OCI-LY7 (cell line): ENCODE measurements at regions of chr10 and their contacts with region 1.

Region 1: DNA sequence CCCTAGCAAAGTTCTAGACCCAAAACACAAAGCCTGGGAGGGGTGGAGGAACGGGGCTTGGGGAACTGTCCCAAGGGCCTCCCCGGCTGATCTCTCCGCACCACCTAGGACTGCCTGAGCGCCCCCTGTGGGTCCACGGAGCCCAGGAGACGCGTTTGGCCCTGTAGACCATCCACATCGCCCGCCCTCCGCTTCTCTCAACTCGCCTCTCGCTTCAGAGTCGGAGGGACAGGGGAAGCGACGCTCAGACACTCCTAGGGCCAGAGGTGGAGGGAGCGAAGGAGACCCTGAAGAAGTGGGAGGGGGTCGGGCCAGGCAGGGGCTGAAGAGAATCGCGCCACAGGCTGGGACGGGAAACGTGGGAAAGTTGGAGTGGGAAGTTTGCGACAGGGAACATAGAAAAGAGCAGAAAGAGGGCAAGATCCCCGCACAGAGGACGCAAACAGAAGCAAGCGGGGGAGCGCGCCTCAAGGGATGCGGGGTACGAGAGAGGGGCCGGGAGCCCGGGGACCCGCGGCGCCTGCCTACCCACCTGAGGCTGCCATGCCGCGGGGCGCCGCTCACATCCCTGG is 378 bp downstream of the PIK3AP1 start:
- DNase-seq: peak; percentile 94
- H3K4me3 ChIP-seq: peak overlapping the region; percentile 87
- H3K27ac ChIP-seq: peak overlapping the region; percentile 91
- H3K4me1 ChIP-seq: peaks cover 66% of the 10 kb centered on the region
- CTCF ChIP-seq: peak; percentile 86

Region 2: GRCh38 chr10:96642973-96643372 is 77.0 kb before region 1 on chr10:
- CTCF ChIA-PET with region 1: interaction called, 7 read pairs
- POLR2A ChIA-PET with region 1: interaction called, 17 read pairs
- intact Hi-C with region 1: loop called (anchors 1 kb)
- DNase-seq: peak; percentile 87
- H3K4me3 ChIP-seq: no peak overlapping the region
- H3K27ac ChIP-seq: peak overlapping the region; percentile 14
- H3K4me1 ChIP-seq: peaks cover 25% of the 10 kb centered on the region
- CTCF ChIP-seq: peak; percentile 98

Region 3: DNA sequence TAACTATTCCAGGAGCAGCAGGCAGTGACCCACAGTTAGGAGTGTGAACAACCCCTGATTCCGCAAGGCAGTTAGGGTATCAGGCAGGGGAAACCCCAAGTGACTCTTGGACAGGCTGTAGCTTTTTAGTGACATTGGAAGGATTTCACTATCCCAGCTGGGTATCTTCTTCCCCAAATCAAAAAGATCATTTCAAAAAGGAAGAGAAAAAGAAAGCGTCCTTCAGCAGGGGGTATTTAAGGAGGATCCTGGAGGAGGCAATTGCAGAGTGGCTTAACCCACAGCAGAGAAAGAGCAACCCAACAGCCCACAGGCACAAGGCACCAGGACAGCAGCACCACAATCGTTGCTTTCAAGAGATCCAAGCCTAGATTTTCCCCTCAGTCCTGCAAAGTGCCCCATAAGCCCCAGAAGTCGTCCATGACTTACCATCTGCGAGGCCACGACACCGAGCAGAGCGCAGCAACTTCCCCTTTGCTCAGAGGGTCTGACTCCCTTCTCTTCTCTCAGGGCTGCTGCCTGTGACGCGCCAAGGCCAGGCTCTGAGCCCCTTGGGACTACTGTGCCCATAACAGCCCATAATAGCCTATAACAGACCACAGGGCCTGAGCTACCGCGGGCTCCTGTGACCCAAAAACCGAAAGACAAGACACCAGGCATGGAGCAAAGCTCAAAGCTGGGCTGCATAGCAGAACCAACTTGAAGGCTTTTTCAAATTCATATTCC is 19.4 kb before region 1 on chr10:
- CTCF ChIA-PET with region 1: interaction called, 4 read pairs
- POLR2A ChIA-PET with region 1: interaction called, 29 read pairs
- intact Hi-C with region 1: loop called (anchors 1 kb)
- DNase-seq: peak; percentile 96
- H3K4me3 ChIP-seq: peak overlapping the region; percentile 75
- H3K27ac ChIP-seq: peak overlapping the region; percentile 96
- H3K4me1 ChIP-seq: peaks cover 81% of the 10 kb centered on the region
- CTCF ChIP-seq: no peak

Region 4: GRCh38 chr10:96743988-96744585 is 24.2 kb after region 1 on chr10:
- CTCF ChIA-PET with region 1: no interaction called
- POLR2A ChIA-PET with region 1: interaction called, 5 read pairs
- intact Hi-C with region 1: loop called (anchors 1 kb)
- DNase-seq: peak; percentile 71
- H3K4me3 ChIP-seq: no peak overlapping the region
- H3K27ac ChIP-seq: peak overlapping the region; percentile 42
- H3K4me1 ChIP-seq: peaks cover 65% of the 10 kb centered on the region
- CTCF ChIP-seq: peak; percentile 87

Region 5: DNA sequence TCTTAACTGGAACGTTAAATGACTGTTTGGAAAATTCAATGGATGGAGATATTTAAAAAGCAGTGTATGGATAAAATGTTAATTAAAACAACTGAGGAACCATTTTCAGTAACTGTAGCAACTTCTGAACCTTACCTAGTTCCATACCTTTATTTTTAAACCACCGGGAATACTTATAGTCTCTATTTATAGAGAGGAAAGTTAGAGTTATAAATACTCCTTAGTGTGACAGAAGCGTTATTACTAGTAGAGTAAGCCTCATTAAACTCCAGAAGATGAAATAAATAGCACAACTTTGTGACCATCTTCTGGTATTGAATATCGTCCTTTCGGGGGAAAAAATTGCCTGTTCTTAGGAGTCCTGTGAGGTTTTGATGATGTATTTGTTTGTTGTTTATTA is 227.1 kb after region 1 on chr10:
- CTCF ChIA-PET with region 1: no interaction called
- POLR2A ChIA-PET with region 1: no interaction called
- intact Hi-C with region 1: no loop called
- DNase-seq: no peak
- H3K4me3 ChIP-seq: no peak overlapping the region
- H3K27ac ChIP-seq: no peak overlapping the region
- H3K4me1 ChIP-seq: no peaks in the 10 kb centered on the region
- CTCF ChIP-seq: no peak